Mucosa of descending colon (tissue), 3 donors: ENCODE measurements at regions of chr13 and their contacts with region 1.

Region 1: DNA sequence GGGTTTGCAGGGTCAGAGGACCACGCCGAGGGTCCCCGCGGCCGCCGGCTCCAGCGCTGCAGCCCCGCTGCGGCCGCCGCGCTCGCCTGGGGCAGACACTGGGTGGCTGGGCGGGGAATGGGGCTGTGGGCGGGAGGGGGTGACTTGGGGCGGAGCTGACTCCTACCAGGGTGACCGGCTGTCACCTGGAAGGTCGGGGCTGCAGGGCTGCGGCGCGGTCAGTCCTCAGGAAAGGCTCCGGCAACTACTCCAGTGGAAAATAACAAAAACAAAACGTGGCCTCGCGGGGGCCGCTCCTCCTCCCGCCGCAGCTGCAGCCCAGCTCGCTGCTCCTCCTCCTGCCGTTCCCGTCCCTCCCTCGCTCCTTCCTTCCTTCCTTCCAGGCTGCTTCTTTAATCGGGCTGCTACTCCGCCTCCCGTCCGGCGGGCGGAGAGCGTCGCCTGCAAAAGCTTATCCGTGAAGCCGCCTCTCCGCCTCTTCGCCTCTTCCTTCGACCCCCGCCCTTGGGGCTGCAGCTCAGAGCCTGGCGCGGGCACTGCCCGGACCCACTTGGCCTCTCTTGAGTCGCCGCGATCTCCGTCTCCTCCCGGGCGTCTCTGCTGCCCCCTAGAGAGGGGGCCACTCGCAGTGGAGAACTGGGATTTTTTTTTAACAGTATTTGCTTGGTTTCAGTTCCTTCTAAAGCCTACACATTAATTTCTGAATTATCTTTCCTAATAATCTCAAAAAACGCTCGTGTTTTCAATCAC is at the start of gene TBC1D4:
- DNase-seq: peak; percentile 88 to 90 (median 89)
- ATAC-seq: peak; percentile 86
- H3K4me3 ChIP-seq: peak within 1 kb of the TSS; percentile 74
- H3K4me1 ChIP-seq: peaks cover 5% of the 10 kb centered on the region
- CTCF ChIP-seq: peak; percentile 84
- total RNA-seq, gene TBC1D4: 13.4 to 24.6 (median 13.8) TPM

Region 2: DNA sequence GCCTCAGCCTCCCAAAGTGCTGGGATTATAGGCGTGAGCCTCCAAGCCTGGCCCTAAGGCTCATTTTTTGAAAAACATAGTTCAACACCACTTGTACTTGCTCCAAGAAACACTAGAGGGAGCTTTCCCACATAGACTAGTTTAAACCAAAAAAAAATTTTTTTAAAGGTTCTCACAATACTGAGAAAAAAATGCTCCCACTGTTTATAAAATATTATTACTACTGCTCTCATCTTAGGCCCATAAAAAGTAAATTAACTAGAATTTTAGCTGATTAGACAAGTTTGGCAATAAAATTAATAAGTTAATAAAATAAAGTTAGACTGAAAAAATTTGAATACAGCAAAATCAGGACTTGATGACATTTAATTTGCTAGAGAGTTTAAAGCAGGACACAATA is 109.7 kb before region 1 on chr13:
- intact Hi-C with region 1: loop called in 1 of 2 experiments (anchors 10 kb)
- DNase-seq: peak in 1 of 3 donors; percentile 48
- ATAC-seq: peak; percentile 70
- H3K4me3 ChIP-seq: no peak overlapping the region
- H3K4me1 ChIP-seq: no peaks in the 10 kb centered on the region
- CTCF ChIP-seq: peak; percentile 21

Region 3: DNA sequence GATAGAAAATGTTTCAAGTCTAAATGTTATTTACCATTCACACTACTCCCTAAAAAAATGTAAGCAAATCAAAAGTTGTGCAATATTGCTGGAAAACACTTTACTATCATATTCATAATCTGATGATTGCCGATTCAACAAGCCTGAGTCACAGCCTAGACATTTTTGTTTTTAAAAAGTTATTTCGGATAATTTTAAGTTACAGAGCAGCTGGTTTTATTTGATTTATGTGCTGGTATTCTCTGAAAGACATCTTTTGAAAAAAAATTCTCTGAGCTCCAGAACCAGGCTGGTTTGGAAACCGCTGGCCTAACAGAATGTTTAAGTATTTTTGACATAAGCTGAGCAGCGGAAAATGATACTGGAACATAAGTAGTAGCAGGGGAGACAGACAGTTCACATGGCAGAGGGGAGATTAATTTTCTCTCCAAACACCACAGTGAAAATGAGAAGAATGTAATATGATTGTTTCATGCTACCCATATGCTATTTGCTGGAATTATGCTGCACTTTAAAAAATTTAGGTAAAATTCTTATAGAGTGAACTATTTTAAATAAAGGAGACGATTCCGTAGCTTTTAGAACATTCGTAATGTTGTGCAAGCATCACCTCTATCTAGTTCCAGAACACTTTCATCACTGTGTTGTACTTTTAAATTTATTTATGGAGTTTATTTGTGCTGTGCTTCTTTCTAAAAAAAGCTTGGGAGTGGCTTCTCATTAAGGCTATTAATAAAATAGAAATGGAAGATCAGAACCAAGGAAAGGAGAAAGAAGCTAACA is 36.3 kb before region 1 on chr13:
- intact Hi-C with region 1: no loop called
- DNase-seq: no peak
- ATAC-seq: no peak
- H3K4me3 ChIP-seq: no peak overlapping the region
- H3K4me1 ChIP-seq: peaks cover 16% of the 10 kb centered on the region
- CTCF ChIP-seq: no peak

Region 4: DNA sequence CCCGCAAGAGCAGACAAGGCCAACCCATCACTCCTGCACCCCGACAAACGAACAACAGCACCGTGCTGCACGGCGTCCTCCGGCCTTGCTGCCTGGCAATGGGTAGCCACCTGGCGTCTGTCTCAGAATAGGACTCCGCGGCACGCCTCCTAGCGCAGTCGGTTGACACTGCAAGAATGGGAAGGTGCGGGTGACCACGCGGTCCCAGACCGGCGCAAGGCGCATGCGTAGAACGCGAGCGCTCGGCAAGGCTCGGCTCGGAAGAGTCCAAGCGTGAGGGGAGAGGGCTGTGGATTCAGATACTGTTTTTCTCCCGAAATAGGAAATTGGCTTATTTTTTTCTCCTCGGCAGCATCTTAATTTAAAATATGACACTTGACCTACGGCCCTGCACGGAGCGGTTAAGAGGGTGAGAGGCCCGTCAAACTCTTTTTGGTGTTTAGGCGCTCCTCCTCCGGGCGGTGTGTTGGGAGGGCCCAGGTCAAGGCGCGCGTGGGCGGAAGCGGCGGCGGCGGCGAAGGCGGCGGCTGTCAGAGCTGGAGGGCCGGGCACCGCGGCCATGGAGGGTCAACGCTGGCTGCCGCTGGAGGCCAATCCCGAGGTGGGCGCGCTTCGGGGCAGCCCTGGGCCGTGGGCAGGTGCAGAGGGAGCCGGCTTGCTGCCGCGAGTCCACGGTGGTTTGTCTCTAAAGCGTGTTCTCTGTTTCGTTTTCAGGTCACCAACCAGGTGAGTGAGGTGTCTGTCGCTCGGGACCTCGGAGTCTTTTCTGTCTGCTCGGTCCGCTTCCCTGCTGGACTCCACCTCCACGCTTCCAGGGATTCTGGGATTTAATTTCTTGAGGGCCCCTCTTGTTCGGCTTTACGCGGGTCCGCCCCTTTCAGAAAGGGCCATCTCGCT is 67.3 kb after region 1 on chr13 and contains the start of gene UCHL3:
- intact Hi-C with region 1: loop called in 1 of 2 experiments (anchors 10 kb)
- DNase-seq: peak; percentile 98 to 99 (median 98)
- ATAC-seq: peak; percentile 97
- H3K4me3 ChIP-seq: peak within 1 kb of the TSS; percentile 88
- H3K4me1 ChIP-seq: peaks cover 10% of the 10 kb centered on the region
- CTCF ChIP-seq: peak; percentile 87
- total RNA-seq, gene UCHL3: 25.7 to 38.8 (median 27.3) TPM

Region 5: GRCh38 chr13:75908141-75908540 is 425.9 kb after region 1 on chr13:
- intact Hi-C with region 1: no loop called
- DNase-seq: no peak
- ATAC-seq: no peak
- H3K4me3 ChIP-seq: no peak overlapping the region
- H3K4me1 ChIP-seq: no peaks in the 10 kb centered on the region
- CTCF ChIP-seq: no peak